ENCODE measurements at regions of chr6 and their contacts with region 1.

Region 1: GRCh38 chr6:46746696-46747095 is at the start of gene ANKRD66:
- DNase-seq: no peak
- ATAC-seq: no peak
- H3K4me3 ChIP-seq: no peak within 1 kb of the TSS
- H3K27ac ChIP-seq: no peak within 1 kb of the TSS
- H3K4me1 ChIP-seq: no peaks in the 10 kb centered on the region
- H3K27me3 ChIP-seq: peaks cover 0 to 5% (median 0%) of the 10 kb centered on the region in 7 donors
- CTCF ChIP-seq: no peak
- total RNA-seq, gene ANKRD66: not detected

Region 2: GRCh38 chr6:46684771-46685170 is 61.9 kb before region 1 on chr6:
- intact Hi-C with region 1: loop called in 1 of 10 experiments (anchors 10 kb)
- DNase-seq: no peak
- ATAC-seq: no peak
- H3K4me3 ChIP-seq: no peak overlapping the region
- H3K27ac ChIP-seq: no peak overlapping the region
- H3K4me1 ChIP-seq: no peaks in the 10 kb centered on the region
- H3K27me3 ChIP-seq: no peaks in the 10 kb centered on the region
- CTCF ChIP-seq: no peak

Region 3: DNA sequence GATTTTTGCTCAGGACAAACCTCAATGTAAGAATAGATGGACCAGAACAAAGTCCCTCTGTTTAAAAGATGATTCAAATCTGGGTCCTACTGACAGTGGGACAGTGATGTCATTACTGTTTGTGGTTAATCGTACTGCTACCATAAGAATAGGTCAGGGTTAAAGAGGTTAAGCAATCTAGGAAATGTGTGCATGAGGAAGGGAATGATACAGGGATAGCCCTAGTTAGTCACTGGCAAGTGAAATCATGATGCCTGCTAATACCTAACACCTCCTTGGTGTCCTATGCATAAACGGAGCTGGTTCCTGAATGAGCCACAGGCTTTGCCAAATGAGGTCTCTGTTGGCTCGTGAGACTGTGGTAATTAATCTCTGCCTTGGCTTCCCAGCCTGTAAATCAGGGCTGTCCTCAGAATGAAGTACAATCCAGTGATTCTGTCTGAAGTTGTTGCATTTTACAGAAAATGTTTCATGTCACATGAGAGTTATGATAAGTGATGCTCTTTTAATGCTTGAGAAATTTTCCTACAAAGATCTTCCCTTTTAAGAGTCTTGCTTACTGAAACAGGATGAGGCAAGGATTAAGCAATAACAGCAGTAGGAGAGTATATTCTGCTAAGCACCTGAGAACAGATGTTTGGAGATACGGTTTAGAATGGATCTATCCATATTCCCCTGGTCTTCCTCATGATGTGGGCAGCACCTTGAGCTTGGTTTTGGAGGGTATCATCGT is 50.3 kb after region 1 on chr6:
- intact Hi-C with region 1: no loop called
- DNase-seq: no peak
- ATAC-seq: no peak
- H3K4me3 ChIP-seq: no peak overlapping the region
- H3K27ac ChIP-seq: no peak overlapping the region
- H3K4me1 ChIP-seq: no peaks in the 10 kb centered on the region
- H3K27me3 ChIP-seq: peaks cover 0 to 9% (median 0%) of the 10 kb centered on the region in 7 donors
- CTCF ChIP-seq: no peak

Measured in heart right ventricle (tissue), 16 donors.